ENCODE measurements at regions of chr17 and their contacts with region 1.

Region 1: GRCh38 chr17:39153599-39154051 is 2.2 kb upstream of the PLXDC1 start:
- DNase-seq: peak; percentile 100
- H3K4me3 Mint-ChIP-seq: peak overlapping the region; percentile 95
- H3K27ac Mint-ChIP-seq: peak overlapping the region; percentile 99
- H3K4me1 Mint-ChIP-seq: peaks cover 29% of the 10 kb centered on the region
- H3K27me3 Mint-ChIP-seq: peaks cover 89% of the 10 kb centered on the region
- CTCF ChIP-seq: peak; percentile 28

Region 2: DNA sequence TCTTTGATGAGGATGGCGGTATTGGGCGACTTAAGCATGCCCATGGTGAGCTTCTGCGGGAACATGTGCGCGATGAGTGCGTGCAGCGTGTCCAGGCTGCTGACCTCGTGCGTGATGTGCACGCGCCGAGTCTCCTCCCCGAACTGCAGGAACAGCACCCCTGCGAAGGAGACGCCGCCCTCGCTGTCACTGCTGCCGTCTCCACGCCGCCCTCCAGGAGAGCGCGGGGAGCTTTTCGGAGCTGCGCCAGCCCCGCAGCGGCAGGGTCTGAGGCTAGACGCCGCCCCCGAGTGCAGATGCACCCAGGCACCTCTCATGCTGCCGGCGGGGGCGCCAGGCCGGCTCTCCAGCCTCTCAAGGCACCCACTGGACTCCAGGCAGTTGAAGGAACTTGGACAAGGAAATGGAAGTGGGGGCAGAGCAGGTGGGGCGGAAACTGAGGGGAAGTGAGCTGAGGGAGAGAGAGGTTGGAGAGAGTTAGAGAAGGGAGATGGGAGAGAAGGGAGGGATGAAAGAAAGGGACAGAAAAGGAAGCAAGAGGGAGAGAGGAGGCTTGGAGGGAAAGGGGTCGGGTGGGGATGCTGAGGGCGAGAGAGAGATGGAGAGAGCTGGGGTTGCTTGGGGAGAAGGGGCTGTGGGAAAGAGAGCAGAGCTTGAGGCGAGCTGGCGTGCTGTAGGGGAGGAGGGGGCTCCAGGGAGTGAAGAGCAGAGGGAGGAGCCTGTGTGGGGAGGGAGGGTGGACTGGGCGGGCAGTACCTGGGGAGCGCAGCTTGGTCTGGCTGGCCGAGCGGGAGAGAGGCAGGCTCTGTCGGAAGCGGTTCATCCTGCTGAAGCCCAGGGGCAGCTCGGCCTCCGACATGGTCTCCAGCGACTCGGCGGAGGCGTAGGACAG is 590.0 kb before region 1 on chr17:
- CTCF ChIA-PET with region 1: no interaction called
- intact Hi-C with region 1: no loop called
- DNase-seq: no peak
- H3K4me3 Mint-ChIP-seq: no peak overlapping the region
- H3K27ac Mint-ChIP-seq: no peak overlapping the region
- H3K4me1 Mint-ChIP-seq: peaks cover 20% of the 10 kb centered on the region
- H3K27me3 Mint-ChIP-seq: peaks cover 65% of the 10 kb centered on the region
- CTCF ChIP-seq: no peak

Region 3: GRCh38 chr17:38761612-38762011 is 392.0 kb before region 1 on chr17:
- CTCF ChIA-PET with region 1: interaction called, 15 read pairs
- intact Hi-C with region 1: no loop called
- DNase-seq: peak; percentile 73
- H3K4me3 Mint-ChIP-seq: no peak overlapping the region
- H3K27ac Mint-ChIP-seq: no peak overlapping the region
- H3K4me1 Mint-ChIP-seq: no peaks in the 10 kb centered on the region
- H3K27me3 Mint-ChIP-seq: no peaks in the 10 kb centered on the region
- CTCF ChIP-seq: peak; percentile 78

Region 4: GRCh38 chr17:39001703-39002637 is 151.7 kb before region 1 on chr17:
- CTCF ChIA-PET with region 1: interaction called, 13 read pairs
- intact Hi-C with region 1: no loop called
- DNase-seq: peak; percentile 93
- H3K4me3 Mint-ChIP-seq: peak overlapping the region; percentile 0
- H3K27ac Mint-ChIP-seq: no peak overlapping the region
- H3K4me1 Mint-ChIP-seq: peaks cover 25% of the 10 kb centered on the region
- H3K27me3 Mint-ChIP-seq: peaks cover 58% of the 10 kb centered on the region
- CTCF ChIP-seq: no peak

Region 5: DNA sequence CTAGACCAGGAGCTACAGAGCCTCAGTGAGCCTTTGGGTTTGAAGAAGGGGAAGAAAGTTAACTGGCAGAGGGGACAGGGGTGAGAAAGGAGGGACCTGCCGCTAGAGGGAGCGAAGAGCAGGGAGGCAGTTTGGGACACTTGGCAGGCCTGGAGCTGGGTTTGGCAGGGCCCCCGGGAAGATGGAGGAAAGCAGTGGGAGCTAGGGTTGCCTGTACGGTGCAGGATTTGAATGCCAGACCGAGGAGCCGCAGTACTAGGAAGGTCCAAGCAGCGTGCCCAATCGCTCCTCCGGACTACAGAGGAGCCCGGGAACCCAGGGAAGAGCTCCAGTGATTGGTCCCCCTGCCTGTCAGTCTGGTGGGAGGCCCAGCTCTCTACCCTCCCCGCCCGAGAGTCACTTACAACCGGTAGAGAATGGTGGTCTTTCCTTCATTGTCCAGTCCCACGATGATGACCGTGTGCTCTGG is 11.1 kb after region 1 on chr17:
- CTCF ChIA-PET with region 1: interaction called, 131 read pairs
- intact Hi-C with region 1: no loop called
- DNase-seq: peak; percentile 99
- H3K4me3 Mint-ChIP-seq: peak overlapping the region; percentile 6
- H3K27ac Mint-ChIP-seq: no peak overlapping the region
- H3K4me1 Mint-ChIP-seq: peaks cover 12% of the 10 kb centered on the region
- H3K27me3 Mint-ChIP-seq: peaks cover 80% of the 10 kb centered on the region
- CTCF ChIP-seq: peak; percentile 100

Region 6: DNA sequence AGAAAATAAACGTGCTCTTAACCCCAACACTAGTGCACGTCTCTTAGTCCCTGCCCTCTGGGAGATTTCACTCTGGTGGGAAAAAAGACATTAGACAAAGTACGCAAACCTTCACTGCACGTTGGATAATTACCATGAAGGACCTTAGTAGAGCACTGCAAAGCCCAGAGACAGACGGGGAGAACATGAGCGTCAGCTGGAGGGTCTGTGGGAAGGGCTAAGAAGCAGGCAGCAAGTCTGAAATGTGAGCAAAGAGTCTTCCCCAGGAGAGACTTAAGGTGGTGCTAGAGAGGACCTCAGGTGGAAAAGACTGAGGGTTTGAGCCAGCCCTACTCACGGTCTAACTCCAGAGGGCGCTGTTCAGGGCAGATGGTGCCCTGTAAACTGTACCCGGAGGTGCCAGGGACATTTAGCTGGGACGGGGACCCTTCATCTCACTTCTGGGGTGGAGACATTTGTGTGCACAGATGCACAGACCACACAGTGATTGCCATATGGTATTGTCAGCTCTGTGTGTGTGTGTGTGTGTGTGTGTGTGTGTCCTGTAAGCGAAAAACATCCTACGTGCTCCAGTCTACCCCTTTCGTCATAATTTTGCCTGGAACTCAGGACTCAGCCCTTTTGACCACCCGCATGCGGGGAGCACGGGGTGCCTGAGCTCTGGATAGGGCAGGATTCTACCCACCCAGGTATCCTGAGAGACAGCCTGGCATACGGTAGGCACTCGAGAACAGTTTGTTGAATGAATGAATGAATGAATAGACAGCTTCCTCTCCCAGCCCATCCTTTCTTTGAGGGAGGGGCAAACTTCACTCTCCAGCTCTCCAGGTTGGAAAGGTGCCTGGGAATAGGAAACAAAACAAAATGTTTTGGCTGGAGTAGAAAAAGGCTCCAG is 82.2 kb after region 1 on chr17:
- CTCF ChIA-PET with region 1: interaction called, 13 read pairs
- intact Hi-C with region 1: no loop called
- DNase-seq: peak; percentile 88
- H3K4me3 Mint-ChIP-seq: no peak overlapping the region
- H3K27ac Mint-ChIP-seq: no peak overlapping the region
- H3K4me1 Mint-ChIP-seq: peaks cover 49% of the 10 kb centered on the region
- H3K27me3 Mint-ChIP-seq: peaks cover 28% of the 10 kb centered on the region
- CTCF ChIP-seq: peak; percentile 100